Psoas muscle (tissue), 8 donors: ENCODE measurements at regions of chr20 and their contacts with region 1.

Region 1: GRCh38 chr20:44733341-44734069 is 12.2 kb upstream of the KCNK15 start:
- DNase-seq: peak; percentile 66 to 80
- ATAC-seq: peak; percentile 55 to 67 (median 63)
- H3K4me3 ChIP-seq: no peak overlapping the region
- H3K27ac ChIP-seq: no peak overlapping the region
- H3K4me1 ChIP-seq: peaks cover 37% of the 10 kb centered on the region
- H3K27me3 ChIP-seq: no peaks in the 10 kb centered on the region
- CTCF ChIP-seq: peak; percentile 97

Region 2: DNA sequence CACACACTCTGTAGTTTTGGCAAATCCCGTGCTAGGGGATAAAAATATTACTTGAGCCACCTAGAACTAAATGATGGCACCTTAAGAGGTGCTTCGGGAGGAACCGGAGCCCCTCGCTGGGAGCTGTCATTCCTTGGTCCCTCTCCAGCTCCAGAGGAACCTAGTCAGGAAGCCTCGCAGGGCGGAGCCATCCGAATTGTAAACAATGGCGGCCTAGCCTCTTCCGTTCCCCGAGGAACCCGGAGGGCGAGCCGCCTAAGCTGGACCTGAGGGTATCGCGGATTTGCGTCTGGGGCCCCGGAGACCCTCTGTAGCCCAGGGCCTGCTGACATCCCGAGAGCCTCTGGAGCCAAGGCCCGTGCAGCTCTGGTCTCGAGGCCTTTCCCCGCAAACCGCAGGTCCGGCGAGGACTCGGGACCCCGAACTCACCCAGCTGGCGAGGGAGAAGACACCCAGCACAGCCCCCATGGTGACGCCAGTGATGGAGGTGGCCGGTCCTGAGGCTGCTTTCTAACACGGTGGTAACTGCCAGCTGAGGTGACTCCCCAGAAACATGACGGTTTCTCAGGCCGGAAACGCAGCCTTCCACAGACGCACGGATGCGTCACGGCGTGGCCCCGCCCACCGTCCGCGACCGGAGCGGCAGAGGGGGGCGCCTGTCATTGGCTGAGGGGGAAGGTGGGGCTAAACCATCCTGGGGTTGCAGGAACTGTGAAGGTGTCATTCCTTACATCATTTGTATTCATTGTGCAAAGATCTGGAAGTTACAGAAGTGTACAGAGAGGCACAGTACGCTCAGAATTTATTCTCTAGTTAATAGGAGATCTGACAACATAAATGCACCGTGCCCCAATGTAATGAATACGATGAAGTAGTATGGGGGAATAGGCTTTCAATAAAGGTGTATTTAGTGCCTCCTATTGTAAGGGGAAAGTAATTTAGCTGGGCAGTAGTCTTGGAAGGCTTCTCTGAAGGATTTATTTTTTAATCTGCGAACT is 211.7 kb before region 1 on chr20 and contains the start of gene SERINC3:
- intact Hi-C with region 1: loop called in 1 of 2 experiments (anchors 10 kb)
- DNase-seq: peak; percentile 97 to 98
- ATAC-seq: peak; percentile 99
- H3K4me3 ChIP-seq: peak within 1 kb of the TSS; percentile 99
- H3K27ac ChIP-seq: peak within 1 kb of the TSS; percentile 100
- H3K4me1 ChIP-seq: peaks cover 42% of the 10 kb centered on the region
- H3K27me3 ChIP-seq: no peaks in the 10 kb centered on the region
- CTCF ChIP-seq: peak; percentile 6
- total RNA-seq, gene SERINC3: 89.5 to 104 (median 97.8) TPM

Region 3: DNA sequence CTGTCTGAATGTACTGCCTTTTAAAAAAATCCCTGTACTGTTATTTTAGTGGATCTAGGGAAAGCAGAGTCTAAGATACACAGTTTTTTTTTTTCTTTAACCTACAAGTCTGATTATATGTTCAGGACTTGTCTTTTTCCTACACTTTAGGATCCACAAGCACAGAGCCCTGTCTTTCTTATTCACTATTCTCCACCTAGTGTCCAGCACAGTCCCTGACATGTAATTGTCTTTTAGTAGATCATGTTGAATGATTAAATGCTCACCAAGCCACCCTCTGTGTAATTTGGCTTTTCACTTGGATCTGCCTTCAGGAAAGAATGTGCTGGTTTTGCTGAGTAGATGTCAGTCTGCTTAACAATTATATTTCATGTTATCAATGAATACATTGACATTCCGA is 116.2 kb after region 1 on chr20:
- intact Hi-C with region 1: no loop called
- DNase-seq: no peak
- ATAC-seq: no peak
- H3K4me3 ChIP-seq: no peak overlapping the region
- H3K27ac ChIP-seq: no peak overlapping the region
- H3K4me1 ChIP-seq: no peaks in the 10 kb centered on the region
- H3K27me3 ChIP-seq: peaks cover 0 to 4% (median 3%) of the 10 kb centered on the region in 3 donors
- CTCF ChIP-seq: no peak